PC-9 (cell line): ENCODE measurements at regions of chr16 and their contacts with region 1.

Region 1: GRCh38 chr16:67571981-67572431 is 9.7 kb downstream of the CTCF start:
- DNase-seq: no peak
- H3K4me3 ChIP-seq: no peak overlapping the region
- H3K27ac ChIP-seq: peak overlapping the region; percentile 33; the same call in 1 of the 2 replicates
- H3K4me1 ChIP-seq: no peaks in the 10 kb centered on the region
- H3K27me3 ChIP-seq: no peaks in the 10 kb centered on the region
- CTCF ChIP-seq: no peak

Region 2: GRCh38 chr16:67447508-67448076 is 124.4 kb before region 1 on chr16:
- CTCF ChIA-PET with region 1: no interaction called
- POLR2A ChIA-PET with region 1: no interaction called
- intact Hi-C with region 1: no loop called
- DNase-seq: peak in 1 of 2 experiments; percentile 46
- H3K4me3 ChIP-seq: no peak overlapping the region
- H3K27ac ChIP-seq: no peak overlapping the region
- H3K4me1 ChIP-seq: peaks cover 4% of the 10 kb centered on the region; the same call in 1 of the 2 replicates
- H3K27me3 ChIP-seq: no peaks in the 10 kb centered on the region
- CTCF ChIP-seq: peak; percentile 56

Region 3: DNA sequence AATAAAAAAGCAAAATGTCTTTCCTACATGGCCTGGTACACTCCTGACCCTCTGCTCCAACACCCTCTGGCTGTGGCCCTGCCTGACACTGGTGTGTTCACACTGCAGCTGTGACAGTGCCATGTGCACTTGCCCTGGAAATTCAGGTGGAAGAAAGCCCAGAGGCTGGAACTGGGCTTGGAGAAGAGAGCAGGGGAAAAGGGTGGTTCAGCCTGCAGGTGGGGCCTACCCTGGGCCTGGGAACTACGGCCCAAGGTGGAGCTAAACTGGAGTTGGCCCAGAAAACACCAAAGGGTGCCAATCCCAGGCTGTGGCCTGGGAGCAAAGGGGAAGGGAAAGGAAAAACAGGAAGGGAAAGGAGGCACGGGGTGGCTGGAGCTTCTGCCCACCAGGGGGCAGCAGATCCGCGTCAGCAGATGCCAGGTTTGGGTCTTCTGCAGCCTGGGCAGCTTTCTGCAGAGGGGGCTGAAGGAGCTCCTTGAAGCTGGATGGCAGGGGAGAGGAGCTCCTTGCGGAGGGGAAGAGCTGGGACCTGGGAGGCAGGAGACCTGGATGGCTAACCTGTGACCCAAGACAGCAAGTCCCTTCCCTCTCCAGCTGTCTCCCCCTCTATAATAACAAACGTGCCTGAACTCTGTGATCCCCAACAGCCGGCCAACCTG is 25.1 kb before region 1 on chr16:
- CTCF ChIA-PET with region 1: no interaction called
- POLR2A ChIA-PET with region 1: interaction called, 14 read pairs
- intact Hi-C with region 1: no loop called
- DNase-seq: peak in 1 of 2 experiments; percentile 75
- H3K4me3 ChIP-seq: no peak overlapping the region
- H3K27ac ChIP-seq: no peak overlapping the region
- H3K4me1 ChIP-seq: no peaks in the 10 kb centered on the region
- H3K27me3 ChIP-seq: no peaks in the 10 kb centered on the region
- CTCF ChIP-seq: peak; percentile 84